Body of pancreas (tissue), 4 donors: ENCODE measurements at regions of chr19 and their contacts with region 1.

Region 1: DNA sequence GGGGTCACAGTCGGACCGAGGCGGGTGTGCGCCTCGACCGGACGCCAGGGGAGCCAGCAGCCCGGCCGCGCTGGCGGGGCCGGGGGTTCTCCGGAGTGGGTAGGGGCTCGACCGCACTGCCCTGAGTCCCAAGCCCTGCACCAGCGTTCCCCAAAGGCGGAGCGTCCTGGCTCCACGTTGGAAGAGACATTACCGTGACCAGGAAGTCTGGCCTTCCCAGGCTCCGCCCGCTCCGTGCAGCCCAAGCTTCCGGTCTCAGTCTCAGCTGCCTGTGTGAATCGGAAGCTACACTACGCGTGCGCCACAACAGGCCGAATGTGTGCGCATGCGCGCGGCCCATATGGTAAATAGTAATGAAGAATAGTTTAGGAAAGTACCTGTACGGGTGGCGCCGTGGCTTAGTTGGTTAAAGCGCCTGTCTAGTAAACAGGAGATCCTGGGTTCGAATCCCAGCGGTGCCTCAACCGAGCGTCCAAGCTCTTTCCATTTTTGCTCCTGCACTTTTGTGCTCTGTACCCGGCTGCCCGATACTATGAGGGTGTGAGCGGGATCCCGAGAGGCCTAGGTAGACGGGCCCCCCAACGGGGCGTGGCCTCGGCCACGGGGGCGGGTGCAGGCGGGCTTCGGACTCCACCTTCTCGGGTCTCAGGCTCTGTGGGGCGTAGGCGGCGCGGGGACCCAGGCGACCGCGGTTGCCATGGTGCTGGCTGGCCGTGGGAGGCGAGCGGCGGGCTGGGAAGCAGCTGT is 17.3 kb upstream of the LRP3 start:
- DNase-seq: peak; percentile 97 to 98 (median 98)
- ATAC-seq: peak; percentile 90
- H3K4me3 ChIP-seq: peak overlapping the region; percentile 42 to 82
- H3K27ac ChIP-seq: peak overlapping the region; percentile 71 to 97 (median 94)
- H3K4me1 ChIP-seq: peaks cover 25% of the 10 kb centered on the region
- H3K27me3 ChIP-seq: no peaks in the 10 kb centered on the region
- CTCF ChIP-seq: peak in 4 of 7 experiments; percentile 20 to 43 (median 38)
- POLR2A ChIP-seq: peak; percentile 77 to 97 (median 94)

Region 2: DNA sequence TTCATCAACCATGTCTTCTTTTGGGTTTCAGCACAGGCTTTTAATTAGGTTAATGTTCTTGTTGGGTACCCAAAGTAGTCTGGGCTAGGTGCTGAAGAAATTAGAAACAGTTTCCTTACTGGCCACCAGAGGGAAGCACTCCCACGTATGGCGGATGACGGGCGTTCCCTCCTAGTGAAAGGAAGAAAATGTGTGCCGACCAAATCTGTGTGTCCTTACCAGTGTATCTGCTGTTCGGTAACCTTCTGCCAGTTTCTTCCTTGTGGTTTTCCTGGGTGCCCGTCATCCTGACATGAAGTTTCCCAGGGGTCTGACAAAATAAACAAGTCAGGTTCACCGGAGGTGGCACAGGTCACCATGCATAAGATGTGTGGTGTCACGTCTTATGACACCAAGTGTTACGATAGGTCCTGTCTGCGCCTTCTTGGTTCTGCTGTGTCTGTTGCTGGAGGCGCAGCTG is 50.9 kb before region 1 on chr19:
- intact Hi-C with region 1: no loop called
- DNase-seq: peak; percentile 48 to 60 (median 54)
- ATAC-seq: peak; percentile 77
- H3K4me3 ChIP-seq: no peak overlapping the region
- H3K27ac ChIP-seq: no peak overlapping the region
- H3K4me1 ChIP-seq: no peaks in the 10 kb centered on the region
- H3K27me3 ChIP-seq: no peaks in the 10 kb centered on the region
- CTCF ChIP-seq: peak; percentile 66 to 84 (median 69)
- POLR2A ChIP-seq: no peak

Region 3: DNA sequence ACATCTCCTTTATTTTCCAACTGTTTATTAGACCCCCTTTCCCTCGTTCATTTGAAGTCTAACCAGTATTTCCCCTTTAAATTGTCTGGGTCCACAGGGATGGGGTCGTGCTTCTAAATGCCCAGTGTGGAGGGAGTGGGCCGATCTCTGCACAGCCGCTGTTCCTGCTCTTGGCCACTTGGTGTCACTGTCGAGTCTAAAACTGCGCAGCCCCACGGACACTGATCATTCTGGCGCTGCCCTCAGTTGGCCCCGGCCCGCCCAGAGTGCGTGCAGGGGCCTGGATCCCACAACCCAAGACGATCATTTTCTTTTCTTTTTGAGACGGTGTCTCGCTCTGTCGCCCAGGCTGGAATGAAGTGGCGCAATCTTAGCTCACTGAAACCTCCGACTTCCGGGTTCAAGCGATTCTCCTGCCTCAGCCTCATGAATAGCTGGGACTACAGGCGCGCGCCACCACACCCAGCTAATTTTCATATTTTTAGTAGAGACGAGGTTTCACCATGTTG is 32.9 kb before region 1 on chr19:
- intact Hi-C with region 1: loop called (anchors 5 kb)
- DNase-seq: peak; percentile 57 to 68 (median 66)
- ATAC-seq: peak; percentile 95
- H3K4me3 ChIP-seq: no peak overlapping the region
- H3K27ac ChIP-seq: no peak overlapping the region
- H3K4me1 ChIP-seq: no peaks in the 10 kb centered on the region
- H3K27me3 ChIP-seq: no peaks in the 10 kb centered on the region
- CTCF ChIP-seq: peak; percentile 80 to 97 (median 91)
- POLR2A ChIP-seq: no peak